ENCODE measurements at regions of chr2 and their contacts with region 1.

Region 1: DNA sequence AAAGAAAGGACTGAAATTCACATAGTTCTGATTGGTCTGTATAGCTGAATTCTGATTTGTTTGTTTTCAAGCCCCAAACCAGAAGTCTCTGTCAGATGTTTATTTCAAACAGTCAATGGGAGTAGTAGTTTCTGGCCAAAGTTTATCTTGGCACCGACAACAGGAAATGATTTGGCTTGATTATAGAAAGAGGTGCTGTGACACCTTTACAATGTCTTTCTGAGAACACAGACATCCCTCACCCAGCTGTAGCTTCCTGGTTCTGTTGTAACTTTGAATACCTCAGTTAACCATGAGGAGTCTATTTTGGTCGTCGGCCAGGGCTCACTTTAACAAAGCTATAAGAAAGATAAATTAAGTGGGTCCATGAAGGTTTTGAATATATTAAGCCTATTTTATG is 545.0 kb upstream of the ZNF804A start:
- DNase-seq: no peak
- H3K4me3 Mint-ChIP-seq: no peak overlapping the region
- H3K27ac Mint-ChIP-seq: no peak overlapping the region
- H3K4me1 Mint-ChIP-seq: no peaks in the 10 kb centered on the region
- H3K27me3 Mint-ChIP-seq: no peaks in the 10 kb centered on the region

Region 2: DNA sequence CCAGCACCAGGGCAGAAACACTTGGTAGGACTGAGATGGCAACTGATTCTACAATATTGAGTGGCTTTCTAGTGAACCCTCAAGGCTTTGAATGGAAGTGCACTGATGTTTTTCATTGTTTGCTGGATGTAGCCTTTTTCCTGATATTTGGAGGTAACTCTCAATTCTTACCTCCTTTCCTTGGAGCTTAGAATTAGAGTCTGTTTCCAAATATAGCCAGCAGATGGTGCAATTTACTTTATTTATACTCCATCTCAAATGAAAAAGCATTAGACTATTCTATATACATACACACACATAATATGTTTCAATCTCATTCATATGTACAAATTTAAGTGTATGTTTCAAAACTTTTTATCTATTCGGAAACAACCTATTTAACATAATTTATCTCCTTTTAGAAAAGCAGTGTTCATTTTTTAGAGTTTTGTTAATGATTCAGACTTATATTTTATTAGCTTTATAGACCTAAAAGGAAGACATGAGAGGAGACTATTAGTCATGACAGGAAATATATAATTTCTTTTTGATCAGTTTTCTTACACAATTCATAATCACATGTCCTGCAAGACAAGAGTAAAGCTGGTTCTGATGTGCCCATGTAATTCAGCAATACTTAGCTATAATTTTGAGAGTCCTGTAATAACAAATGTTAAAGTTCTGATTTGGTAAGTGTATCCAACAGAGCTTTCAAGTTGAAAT is 804.3 kb before region 1 on chr2:
- CTCF ChIA-PET with region 1: no interaction called
- intact Hi-C with region 1: loop called (anchors 5 kb)
- DNase-seq: no peak
- H3K4me3 Mint-ChIP-seq: no peak overlapping the region
- H3K27ac Mint-ChIP-seq: no peak overlapping the region
- H3K4me1 Mint-ChIP-seq: no peaks in the 10 kb centered on the region
- H3K27me3 Mint-ChIP-seq: no peaks in the 10 kb centered on the region

Measured in activated naive CD4-positive, alpha-beta T cell treated with anti-CD3 and anti-CD28 coated beads for 36 hours (primary cell).